ENCODE measurements at regions of chr4 and their contacts with region 1.

Region 1: GRCh38 chr4:109826719-109827118 is 1.1 kb upstream of the RRH start:
- DNase-seq: no peak
- H3K4me3 ChIP-seq: no peak overlapping the region
- CTCF ChIP-seq: peak; percentile 20

Region 2: DNA sequence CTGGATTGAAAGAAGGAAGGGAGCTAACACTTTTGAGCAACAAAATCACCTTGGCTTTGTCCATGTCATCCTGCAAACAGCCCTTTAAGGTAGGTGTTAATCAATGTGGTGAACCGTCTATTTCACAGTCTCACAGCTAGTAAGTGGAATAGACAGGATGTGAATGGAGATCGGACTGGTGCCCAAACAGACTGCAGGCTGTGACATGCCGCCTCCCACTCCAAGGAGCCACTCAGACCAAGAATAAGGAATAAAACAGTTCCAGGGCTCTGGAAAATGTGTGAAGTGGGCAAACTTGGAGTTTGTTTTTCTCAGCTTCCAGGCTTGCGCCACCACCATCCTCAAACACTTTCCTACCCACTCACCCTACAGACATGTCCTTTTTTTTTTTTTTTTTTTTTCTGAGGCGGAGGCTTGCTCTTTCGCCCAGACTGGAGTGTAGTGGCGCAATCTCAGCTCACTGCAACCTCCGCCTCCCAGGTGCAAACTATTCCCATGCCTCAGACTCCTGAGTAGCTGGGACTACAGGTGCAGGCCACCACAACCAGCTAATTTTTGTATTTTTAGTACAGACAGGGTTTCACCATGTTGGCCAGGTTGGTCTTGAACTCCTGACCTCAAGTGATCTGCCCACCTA is 450.8 kb before region 1 on chr4:
- CTCF ChIA-PET with region 1: no interaction called
- POLR2A ChIA-PET with region 1: no interaction called
- DNase-seq: no peak
- H3K4me3 ChIP-seq: no peak overlapping the region
- CTCF ChIP-seq: no peak

Region 3: GRCh38 chr4:109611045-109611646 is 215.6 kb before region 1 on chr4:
- CTCF ChIA-PET with region 1: no interaction called
- POLR2A ChIA-PET with region 1: no interaction called
- DNase-seq: peak; percentile 36
- H3K4me3 ChIP-seq: no peak overlapping the region
- CTCF ChIP-seq: no peak

Region 4: GRCh38 chr4:109622626-109623025 is 204.1 kb before region 1 on chr4:
- CTCF ChIA-PET with region 1: no interaction called
- POLR2A ChIA-PET with region 1: no interaction called
- DNase-seq: no peak
- H3K4me3 ChIP-seq: no peak overlapping the region
- CTCF ChIP-seq: no peak

Region 5: DNA sequence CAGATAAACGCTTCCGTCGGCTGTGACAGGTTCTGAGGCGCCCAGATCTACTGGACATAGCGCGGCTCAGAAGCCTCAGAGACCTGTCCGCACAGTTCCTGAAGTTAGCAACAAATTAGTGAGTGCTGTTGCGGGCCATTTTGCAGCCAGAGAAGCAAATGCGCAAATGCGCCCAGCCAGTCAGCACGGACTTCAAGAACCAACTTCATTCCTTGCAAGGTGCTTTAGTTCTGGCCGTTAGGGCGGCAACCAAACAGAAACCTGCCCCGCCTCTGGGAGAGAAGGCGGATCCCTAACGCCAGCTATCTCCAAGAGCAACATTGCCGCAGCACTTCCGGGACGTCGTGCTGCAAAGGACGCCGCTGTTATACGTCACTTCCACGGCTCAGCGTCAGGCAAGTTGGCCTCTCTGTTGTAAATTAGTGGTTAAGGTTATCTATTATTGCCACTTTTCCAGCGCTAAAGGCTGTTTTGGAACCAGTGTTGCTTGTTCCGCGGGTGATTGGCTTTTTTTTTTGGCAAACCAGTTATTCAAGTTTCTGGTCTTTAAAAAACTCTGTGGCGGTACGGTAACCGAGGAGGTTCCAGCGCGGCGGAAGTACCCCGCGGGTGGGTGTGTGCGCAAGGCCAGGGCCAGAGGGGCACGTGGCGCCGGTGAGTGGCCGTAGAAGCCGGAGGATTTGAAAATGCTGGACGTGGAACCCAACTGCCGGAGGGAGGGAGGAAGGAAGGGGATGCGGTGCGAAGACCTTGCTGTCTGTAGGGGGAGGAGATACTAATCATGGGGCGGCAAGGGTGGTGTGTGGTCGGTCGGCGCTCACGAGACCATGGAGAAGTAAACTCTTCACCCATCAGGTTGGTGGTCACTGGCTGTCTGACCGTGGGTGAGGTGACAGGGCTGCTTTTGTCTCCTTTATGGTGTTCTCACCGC is 11.3 kb before region 1 on chr4 and contains the start of gene GAR1:
- CTCF ChIA-PET with region 1: interaction called, 27 read pairs
- POLR2A ChIA-PET with region 1: no interaction called
- DNase-seq: peak; percentile 46
- H3K4me3 ChIP-seq: peak within 1 kb of the TSS; percentile 98
- CTCF ChIP-seq: no peak